Esophagus muscularis mucosa (tissue), 4 donors: ENCODE measurements at regions of chr20 and their contacts with region 1.

Region 1: GRCh38 chr20:34849778-34850177 is 22.9 kb downstream of the GGT7 start:
- DNase-seq: no peak
- H3K4me3 ChIP-seq: no peak overlapping the region
- H3K27ac ChIP-seq: no peak overlapping the region
- H3K4me1 ChIP-seq: no peaks in the 10 kb centered on the region
- H3K27me3 ChIP-seq: no peaks in the 10 kb centered on the region
- CTCF ChIP-seq: no peak
- EP300 ChIP-seq: no peak
- POLR2A ChIP-seq: no peak

Region 2: GRCh38 chr20:34781220-34781619 is 68.6 kb before region 1 on chr20:
- intact Hi-C with region 1: loop called (anchors 10 kb)
- DNase-seq: no peak
- H3K4me3 ChIP-seq: no peak overlapping the region
- H3K27ac ChIP-seq: no peak overlapping the region
- H3K4me1 ChIP-seq: no peaks in the 10 kb centered on the region
- H3K27me3 ChIP-seq: no peaks in the 10 kb centered on the region
- CTCF ChIP-seq: no peak
- EP300 ChIP-seq: no peak
- POLR2A ChIP-seq: no peak